ENCODE measurements at regions of chr15 and their contacts with region 1.

Region 1: GRCh38 chr15:52261498-52262242 is 33.9 kb downstream of the MYO5C start:
- DNase-seq: peak; percentile 87
- H3K4me3 Mint-ChIP-seq: peak overlapping the region; percentile 40
- H3K27ac Mint-ChIP-seq: peak overlapping the region; percentile 99
- H3K4me1 Mint-ChIP-seq: peaks cover 28% of the 10 kb centered on the region
- H3K27me3 Mint-ChIP-seq: no peaks in the 10 kb centered on the region
- CTCF ChIP-seq: no peak

Region 2: DNA sequence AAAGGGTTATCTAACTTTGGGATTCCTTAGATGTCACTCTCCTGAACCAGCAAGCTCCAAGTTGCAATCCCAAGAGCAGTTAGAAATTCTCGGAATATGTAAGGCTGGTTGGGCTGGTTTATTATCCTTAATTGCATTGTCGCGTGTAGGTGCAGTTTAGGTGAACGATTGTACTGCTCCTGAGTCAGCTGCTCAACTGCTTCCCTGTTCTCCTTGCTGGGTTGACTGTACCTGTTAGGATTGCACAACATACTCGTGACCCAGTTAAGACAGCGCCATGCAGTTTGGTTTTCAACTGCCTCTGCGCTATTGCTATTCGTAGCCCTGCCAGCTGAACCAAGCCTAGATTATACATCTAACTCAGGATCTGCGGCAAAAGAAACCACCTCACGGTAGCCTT is 190.1 kb before region 1 on chr15:
- CTCF ChIA-PET with region 1: no interaction called
- intact Hi-C with region 1: no loop called
- DNase-seq: peak; percentile 66
- H3K4me3 Mint-ChIP-seq: no peak overlapping the region
- H3K27ac Mint-ChIP-seq: no peak overlapping the region
- H3K4me1 Mint-ChIP-seq: peaks cover 25% of the 10 kb centered on the region
- H3K27me3 Mint-ChIP-seq: no peaks in the 10 kb centered on the region
- CTCF ChIP-seq: no peak

Region 3: GRCh38 chr15:52217186-52217585 is 44.5 kb before region 1 on chr15:
- CTCF ChIA-PET with region 1: no interaction called
- intact Hi-C with region 1: no loop called
- DNase-seq: peak; percentile 25
- H3K4me3 Mint-ChIP-seq: no peak overlapping the region
- H3K27ac Mint-ChIP-seq: no peak overlapping the region
- H3K4me1 Mint-ChIP-seq: no peaks in the 10 kb centered on the region
- H3K27me3 Mint-ChIP-seq: no peaks in the 10 kb centered on the region
- CTCF ChIP-seq: no peak

Region 4: GRCh38 chr15:52288051-52288942 is 26.6 kb after region 1 on chr15:
- CTCF ChIA-PET with region 1: interaction called, 10 read pairs
- intact Hi-C with region 1: loop called (anchors 2 kb)
- DNase-seq: peak; percentile 82
- H3K4me3 Mint-ChIP-seq: peak overlapping the region; percentile 55
- H3K27ac Mint-ChIP-seq: peak overlapping the region; percentile 81
- H3K4me1 Mint-ChIP-seq: peaks cover 47% of the 10 kb centered on the region
- H3K27me3 Mint-ChIP-seq: no peaks in the 10 kb centered on the region
- CTCF ChIP-seq: no peak

Region 5: GRCh38 chr15:52324109-52324508 is 62.4 kb after region 1 on chr15:
- CTCF ChIA-PET with region 1: no interaction called
- intact Hi-C with region 1: no loop called
- DNase-seq: no peak
- H3K4me3 Mint-ChIP-seq: no peak overlapping the region
- H3K27ac Mint-ChIP-seq: no peak overlapping the region
- H3K4me1 Mint-ChIP-seq: no peaks in the 10 kb centered on the region
- H3K27me3 Mint-ChIP-seq: no peaks in the 10 kb centered on the region
- CTCF ChIP-seq: no peak

Region 6: DNA sequence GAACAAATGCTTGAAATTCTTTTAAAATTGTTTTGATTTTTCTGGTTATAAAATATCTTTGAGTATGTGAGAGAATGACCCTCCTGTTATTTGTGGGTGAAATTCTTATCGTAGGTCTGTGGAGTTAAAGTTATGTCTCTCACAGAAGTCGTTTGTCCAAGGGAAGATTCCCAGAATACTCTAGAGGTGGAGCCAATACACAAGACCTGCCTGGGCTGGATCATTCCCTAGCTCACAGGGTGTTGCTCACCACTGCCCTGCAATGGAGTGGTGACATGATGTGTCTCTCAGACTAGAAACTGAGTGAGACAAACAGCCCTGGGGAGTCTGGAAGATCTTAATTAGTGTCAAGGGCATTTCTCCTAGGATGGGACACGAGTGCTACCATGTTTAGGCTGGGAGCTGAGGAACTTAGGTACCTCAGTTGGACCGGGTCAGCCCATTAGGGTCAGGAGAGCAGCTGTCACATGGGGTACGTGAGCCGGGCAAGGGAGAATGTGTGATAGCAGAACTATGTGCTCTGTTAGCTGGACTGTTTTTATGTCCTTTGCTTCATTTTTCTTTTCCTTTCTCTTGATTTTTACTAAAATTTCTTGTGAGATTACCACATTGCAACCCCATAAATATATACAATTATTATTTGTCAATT is 87.5 kb after region 1 on chr15:
- CTCF ChIA-PET with region 1: no interaction called
- intact Hi-C with region 1: no loop called
- DNase-seq: no peak
- H3K4me3 Mint-ChIP-seq: no peak overlapping the region
- H3K27ac Mint-ChIP-seq: no peak overlapping the region
- H3K4me1 Mint-ChIP-seq: no peaks in the 10 kb centered on the region
- H3K27me3 Mint-ChIP-seq: no peaks in the 10 kb centered on the region
- CTCF ChIP-seq: no peak

Measured in Calu3 (cell line).